Ascending aorta (tissue), 2 donors: ENCODE measurements at regions of chr2 and their contacts with region 1.

Region 1: GRCh38 chr2:131093006-131093695 is at the start of gene FAM168B:
- DNase-seq: peak; percentile 47 to 91
- H3K4me3 ChIP-seq: peak within 1 kb of the TSS; percentile 88 to 98
- H3K27ac ChIP-seq: peak within 1 kb of the TSS; percentile 88 to 98
- H3K4me1 ChIP-seq: peaks cover 0 to 15% of the 10 kb centered on the region in 2 donors
- H3K27me3 ChIP-seq: no peaks in the 10 kb centered on the region
- CTCF ChIP-seq: no peak
- total RNA-seq, gene FAM168B: 64.3 TPM

Region 2: DNA sequence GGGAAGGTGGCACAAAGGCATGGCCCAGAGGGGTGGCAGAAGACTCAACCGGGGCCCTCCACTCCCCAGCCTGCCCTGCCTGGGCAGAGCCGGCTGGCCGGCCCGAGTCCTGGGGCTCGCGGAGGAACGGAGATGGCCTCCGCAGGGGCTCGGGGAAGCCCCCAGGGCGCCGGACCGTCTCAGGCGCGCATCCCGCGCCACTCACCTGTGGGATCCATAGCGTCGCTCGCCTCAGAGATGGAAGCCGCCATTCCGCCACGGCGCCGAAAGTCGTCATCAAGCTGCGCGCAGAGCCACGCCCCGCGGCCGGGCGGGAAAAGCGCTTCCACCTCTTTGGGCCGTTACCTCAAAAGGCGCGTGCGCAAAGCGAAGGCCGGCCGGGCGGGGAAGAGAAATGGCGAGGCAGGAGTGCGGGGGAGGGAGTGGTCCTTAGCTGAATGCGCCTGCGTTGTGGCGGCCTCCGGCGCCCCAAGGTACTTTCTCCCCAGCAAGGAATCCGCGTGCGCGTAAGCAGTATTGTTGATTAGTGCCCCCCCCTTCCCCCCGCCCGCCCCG is 911.7 kb before region 1 on chr2 and contains the start of gene SMPD4:
- intact Hi-C with region 1: loop called (anchors 2 kb)
- DNase-seq: peak; percentile 86 to 98
- H3K4me3 ChIP-seq: peak within 1 kb of the TSS; percentile 92 to 99
- H3K27ac ChIP-seq: peak within 1 kb of the TSS; percentile 82 to 90
- H3K4me1 ChIP-seq: peaks cover 9 to 11% of the 10 kb centered on the region in 2 donors
- H3K27me3 ChIP-seq: no peaks in the 10 kb centered on the region
- CTCF ChIP-seq: no peak
- total RNA-seq, gene SMPD4: 185 TPM

Region 3: DNA sequence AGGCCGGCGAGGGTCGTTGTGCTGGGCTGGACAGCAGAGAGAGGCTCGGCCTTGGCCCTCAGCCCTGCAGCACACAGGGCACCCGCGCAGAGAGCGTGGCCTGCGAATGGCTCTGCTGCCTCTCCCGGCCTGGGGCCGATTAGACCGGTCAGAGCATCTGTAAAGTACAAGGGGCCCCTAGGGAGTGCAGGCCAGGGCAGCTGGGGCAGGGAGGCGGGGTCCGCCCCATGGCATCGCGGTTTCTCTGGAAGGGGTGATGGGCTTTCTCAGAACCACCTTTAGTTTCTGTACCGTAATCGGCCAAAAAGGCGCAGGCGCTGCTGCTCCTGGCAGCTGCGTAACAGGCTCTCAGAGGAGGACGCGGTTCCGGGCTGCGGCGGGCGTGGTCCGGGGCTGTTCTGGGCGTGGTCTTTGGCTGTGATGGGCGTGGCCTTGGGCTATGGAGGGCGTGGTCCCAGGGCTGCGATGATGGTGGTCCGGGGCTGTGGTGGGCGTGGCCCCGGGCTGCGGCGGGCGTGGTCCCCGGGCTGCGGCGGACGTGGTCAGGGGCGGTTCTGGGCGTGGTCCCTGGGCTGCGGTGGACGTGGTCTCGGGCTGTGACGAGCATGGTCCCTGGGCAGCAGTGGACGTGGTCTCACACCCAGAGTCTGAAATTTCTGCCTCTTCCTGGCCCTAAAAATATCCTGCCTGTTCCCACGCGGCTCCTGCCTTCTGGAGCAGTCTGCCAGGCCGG is 365.7 kb before region 1 on chr2:
- intact Hi-C with region 1: loop called (anchors 5 kb)
- DNase-seq: peak; percentile 46 to 91
- H3K4me3 ChIP-seq: peak overlapping the region; percentile 64 to 67
- H3K27ac ChIP-seq: peak overlapping the region; percentile 73 to 86
- H3K4me1 ChIP-seq: peaks cover 7 to 15% of the 10 kb centered on the region in 2 donors
- H3K27me3 ChIP-seq: no peaks in the 10 kb centered on the region
- CTCF ChIP-seq: no peak

Region 4: DNA sequence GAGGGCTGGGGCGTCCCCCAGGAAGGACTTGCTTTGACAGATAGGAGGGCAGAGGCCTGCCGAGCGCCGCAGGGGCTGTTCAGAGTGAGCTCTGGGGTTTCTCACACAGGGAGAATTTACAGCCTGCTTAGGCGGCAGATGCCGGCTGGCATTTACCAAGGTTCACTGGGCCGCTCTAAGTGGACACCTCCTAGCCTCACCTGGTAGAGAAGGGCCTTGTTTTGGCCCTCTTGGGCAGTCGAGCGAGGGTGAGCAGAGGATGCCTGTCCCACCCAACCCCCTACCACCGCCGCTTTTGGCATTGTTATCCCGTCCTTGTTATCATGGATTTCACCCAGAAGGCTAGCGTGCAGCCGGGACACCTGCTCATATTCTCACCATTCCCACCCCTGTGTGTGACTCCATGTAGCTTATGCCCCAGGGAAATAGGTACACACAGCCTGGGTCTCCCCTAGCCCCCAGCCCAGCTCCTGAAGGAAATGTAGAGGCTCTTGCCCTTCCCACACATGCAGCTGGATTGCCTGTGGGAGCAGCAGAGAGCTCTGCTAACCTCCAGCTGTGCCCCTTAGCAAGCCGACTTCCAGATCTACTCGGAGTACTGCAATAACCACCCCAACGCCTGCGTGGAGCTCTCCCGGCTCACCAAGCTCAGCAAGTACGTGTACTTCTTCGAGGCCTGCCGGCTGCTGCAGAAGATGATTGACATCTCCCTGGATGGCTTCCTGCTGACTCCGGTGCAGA is 52.3 kb before region 1 on chr2:
- intact Hi-C with region 1: no loop called
- DNase-seq: peak; percentile 4 to 48
- H3K4me3 ChIP-seq: no peak overlapping the region
- H3K27ac ChIP-seq: no peak overlapping the region
- H3K4me1 ChIP-seq: no peaks in the 10 kb centered on the region
- H3K27me3 ChIP-seq: no peaks in the 10 kb centered on the region
- CTCF ChIP-seq: no peak

Region 5: GRCh38 chr2:131105156-131105949 is 12.2 kb after region 1 on chr2 and contains the start of gene PLEKHB2:
- intact Hi-C with region 1: loop called (anchors 1 kb)
- DNase-seq: peak; percentile 64 to 96
- H3K4me3 ChIP-seq: peak within 1 kb of the TSS; percentile 83 to 97
- H3K27ac ChIP-seq: peak within 1 kb of the TSS; percentile 85 to 86
- H3K4me1 ChIP-seq: peaks cover 0 to 14% of the 10 kb centered on the region in 2 donors
- H3K27me3 ChIP-seq: no peaks in the 10 kb centered on the region
- CTCF ChIP-seq: peak in 1 of 3 experiments; percentile 13
- total RNA-seq, gene PLEKHB2: 61.7 TPM

Region 6: DNA sequence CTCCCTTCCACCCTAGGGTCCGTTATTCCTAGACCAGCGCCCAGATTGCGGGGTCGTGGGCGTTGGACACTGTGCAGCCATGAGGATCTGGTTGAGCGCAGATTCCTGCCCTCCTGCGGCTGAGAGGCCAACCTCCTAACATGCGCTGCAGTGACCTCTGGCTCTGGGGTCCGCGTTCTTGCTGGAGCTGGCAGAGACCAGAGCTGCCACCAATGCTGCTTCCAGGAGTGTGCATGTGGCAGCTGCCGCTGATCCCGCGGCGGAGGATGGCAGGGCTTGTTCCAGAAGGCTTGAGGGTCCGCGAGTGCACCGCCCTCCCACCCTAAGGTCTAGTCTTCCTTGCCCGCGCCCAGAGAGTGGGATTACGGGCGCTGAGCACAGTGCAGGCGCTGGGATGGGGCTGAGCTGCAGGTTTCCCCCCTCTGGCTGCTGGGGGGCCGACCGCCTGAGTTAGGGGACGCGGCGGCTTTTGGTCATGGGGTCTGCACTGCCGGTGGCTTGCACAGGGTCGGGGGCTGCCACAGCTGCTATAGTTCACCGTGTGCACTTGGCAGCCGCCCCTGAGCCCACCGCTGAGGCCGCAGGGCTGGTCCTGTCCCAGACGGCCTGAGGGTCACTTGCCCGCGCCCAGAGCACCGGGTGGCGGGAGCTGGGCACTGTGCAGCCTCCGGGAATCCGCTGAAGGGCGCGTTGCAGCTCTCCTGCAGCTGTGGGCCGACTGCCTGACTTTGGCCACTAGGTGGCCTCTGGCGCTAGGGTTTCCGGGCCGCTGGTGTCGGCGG is 580.4 kb after region 1 on chr2:
- intact Hi-C with region 1: loop called (anchors 5 kb)
- DNase-seq: peak in 1 of 2 donors; percentile 87
- H3K4me3 ChIP-seq: peak overlapping the region; percentile 44 to 61
- H3K27ac ChIP-seq: no peak overlapping the region
- H3K4me1 ChIP-seq: peaks cover 0 to 16% of the 10 kb centered on the region in 2 donors
- H3K27me3 ChIP-seq: no peaks in the 10 kb centered on the region
- CTCF ChIP-seq: peak; percentile 80 to 95 (median 89)